GM18951 (cell line): ENCODE measurements at regions of chr3 and their contacts with region 1.

Region 1: GRCh38 chr3:129249276-129250065 is at the start of gene COPG1:
- POLR2A ChIP-seq: peak; percentile 97

Region 2: DNA sequence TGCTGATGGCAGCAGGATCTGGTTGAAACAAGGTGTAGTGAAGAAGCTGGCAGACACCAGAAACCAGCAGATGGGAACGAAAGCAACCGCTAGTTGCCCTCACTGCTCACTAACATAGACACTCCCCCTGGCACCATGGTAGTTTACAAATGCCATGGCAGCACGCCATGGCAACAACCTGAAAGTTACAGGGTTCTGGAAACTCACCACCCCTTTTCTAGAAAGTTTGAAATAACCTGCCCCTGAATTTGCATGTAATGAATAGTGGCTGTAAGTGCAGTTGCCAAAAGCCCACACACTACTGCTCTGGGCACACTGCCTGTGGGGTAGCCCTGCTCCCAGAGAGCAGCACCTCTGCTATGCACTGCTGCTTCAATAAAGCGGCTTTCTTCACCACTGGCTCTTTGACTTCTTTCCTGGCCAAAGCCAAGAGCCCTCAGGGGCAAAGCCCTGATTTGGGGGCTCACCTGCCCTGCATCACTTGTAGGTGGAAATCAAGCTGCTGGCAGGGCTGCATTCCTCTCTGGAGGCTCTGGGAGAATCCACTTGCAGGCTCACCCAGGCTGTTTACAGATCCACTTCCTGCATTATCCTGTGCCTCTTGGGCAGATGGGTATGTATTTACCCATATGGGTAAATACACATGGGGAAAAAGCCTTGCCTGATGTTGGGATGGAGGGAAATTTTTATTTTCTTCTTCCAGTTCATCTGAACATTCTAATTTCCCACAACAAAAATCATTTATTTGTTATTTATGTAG is 190.8 kb before region 1 on chr3:
- in situ Hi-C with region 1: loop called (anchors 10 kb)
- POLR2A ChIP-seq: no peak

Region 3: GRCh38 chr3:129633751-129634392 is 384.4 kb after region 1 on chr3:
- in situ Hi-C with region 1: no loop called
- POLR2A ChIP-seq: no peak